Right ventricle myocardium inferior (tissue), 1 donor: ENCODE measurements at regions of chr21 and their contacts with region 1.

Region 1: DNA sequence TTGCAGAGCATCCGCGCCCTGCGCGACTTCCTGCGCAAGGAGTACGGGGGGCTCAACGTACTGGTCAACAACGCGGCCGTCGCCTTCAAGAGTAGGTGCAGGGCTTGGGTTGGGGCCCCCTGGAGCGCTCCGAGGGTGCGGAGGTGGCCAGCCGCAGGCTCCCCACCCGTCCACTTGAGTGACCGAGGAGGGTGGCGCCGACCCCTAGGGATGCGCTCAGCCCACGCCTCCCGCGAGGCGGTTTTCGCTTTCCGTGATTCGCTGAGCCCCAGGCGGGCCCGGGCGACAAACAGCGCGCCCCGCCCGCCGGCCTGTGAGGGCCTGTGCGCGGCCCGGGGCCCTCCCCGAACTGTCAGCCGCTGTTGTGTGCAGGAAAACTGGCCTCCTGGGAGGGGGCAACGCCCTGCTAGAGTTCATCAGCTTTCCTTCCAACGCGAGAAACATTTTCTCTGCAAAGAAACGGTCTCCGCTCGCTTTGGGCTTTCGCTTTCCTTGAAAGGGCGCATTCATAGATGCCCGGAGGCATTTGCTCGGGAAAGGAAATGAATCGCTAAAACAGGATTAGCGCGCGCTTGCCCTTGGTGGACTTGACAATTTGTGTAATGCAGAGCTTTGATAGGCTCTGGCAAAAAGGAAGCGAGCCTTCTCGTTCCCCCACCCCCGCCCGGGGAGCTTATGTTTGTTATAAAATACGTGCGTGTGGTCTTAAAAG is 668 bp downstream of the CBR3 start:
- DNase-seq: peak; percentile 90
- ATAC-seq: peak; percentile 92

Region 2: GRCh38 chr21:36260030-36260787 is 124.7 kb after region 1 on chr21:
- intact Hi-C with region 1: loop called (anchors 5 kb)
- DNase-seq: no peak
- ATAC-seq: peak; percentile 79

Region 3: DNA sequence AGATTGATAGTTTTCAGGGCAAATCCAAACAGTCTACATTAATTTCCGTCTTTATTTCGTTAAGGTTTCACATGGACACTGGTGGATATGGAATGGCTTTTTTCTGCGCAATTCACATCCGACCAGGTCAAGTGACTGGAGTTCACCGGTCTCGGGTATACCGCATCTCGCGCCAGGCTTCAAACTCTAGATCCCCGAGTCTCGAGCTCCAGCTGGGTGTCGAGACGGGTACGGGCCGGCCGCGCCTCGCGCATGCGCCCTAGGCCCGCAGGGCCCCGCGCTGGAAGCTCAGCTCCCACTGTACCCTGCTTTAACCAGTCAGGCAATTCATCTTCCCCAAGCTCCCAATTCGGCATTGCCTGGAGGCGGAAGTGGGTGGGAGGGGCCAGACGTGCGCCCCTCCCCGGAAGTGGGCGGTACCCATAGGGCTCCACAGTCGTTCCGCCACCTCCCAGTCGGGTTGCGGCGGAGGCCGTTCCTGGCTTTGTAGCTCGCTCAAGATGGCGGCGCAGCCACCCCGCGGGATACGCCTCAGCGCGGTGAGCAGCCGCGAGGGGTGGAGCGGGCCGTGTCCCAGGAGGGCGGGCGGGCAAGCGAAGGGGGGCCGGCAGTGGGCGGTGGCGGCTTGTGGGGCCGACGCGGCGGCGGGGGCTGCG is 184.3 kb after region 1 on chr21 and contains the start of gene MORC3:
- intact Hi-C with region 1: loop called (anchors 5 kb)
- DNase-seq: peak; percentile 99
- ATAC-seq: peak; percentile 98
- total RNA-seq, gene MORC3: 21.6 TPM